Psoas muscle (tissue), 8 donors: ENCODE measurements at regions of chr7 and their contacts with region 1.

Region 1: GRCh38 chr7:26365077-26365900 is 73.6 kb downstream of the SNX10 start:
- DNase-seq: no peak
- ATAC-seq: peak; percentile 78 to 96 (median 88)
- H3K4me3 ChIP-seq: no peak overlapping the region
- H3K27ac ChIP-seq: no peak overlapping the region
- H3K4me1 ChIP-seq: no peaks in the 10 kb centered on the region
- H3K27me3 ChIP-seq: peaks cover 0 to 5% (median 5%) of the 10 kb centered on the region in 3 donors
- CTCF ChIP-seq: peak; percentile 80

Region 2: GRCh38 chr7:25259587-25260243 is 1105.6 kb before region 1 on chr7:
- intact Hi-C with region 1: loop called (anchors 10 kb)
- DNase-seq: peak; percentile 32 to 56
- ATAC-seq: peak; percentile 83 to 96 (median 88)
- H3K4me3 ChIP-seq: no peak overlapping the region
- H3K27ac ChIP-seq: no peak overlapping the region
- H3K4me1 ChIP-seq: peaks cover 3% of the 10 kb centered on the region
- H3K27me3 ChIP-seq: no peaks in the 10 kb centered on the region
- CTCF ChIP-seq: peak; percentile 79

Region 3: DNA sequence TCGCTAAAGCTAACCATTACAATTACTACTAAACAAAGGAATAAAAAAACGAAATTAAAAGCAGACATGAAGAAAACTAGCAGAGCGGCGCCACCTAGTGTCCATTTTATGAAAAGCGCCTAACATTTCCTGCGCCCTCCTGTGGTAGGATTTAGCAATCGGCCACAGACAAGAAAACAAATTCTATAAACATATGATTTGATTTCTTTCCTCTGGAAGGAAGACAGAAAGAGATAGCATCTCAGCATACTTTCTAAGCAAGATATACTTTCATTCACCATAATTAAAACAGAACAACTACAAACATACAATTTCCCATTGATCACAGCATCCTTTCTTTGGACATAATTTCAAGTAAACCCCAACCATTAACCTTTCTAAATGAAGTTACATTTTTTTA is 799.3 kb before region 1 on chr7:
- intact Hi-C with region 1: loop called in 1 of 2 experiments (anchors 10 kb)
- DNase-seq: peak; percentile 17 to 64
- ATAC-seq: peak in 3 of 4 donors; percentile 64 to 80 (median 70)
- H3K4me3 ChIP-seq: peak overlapping the region; percentile 22
- H3K27ac ChIP-seq: no peak overlapping the region
- H3K4me1 ChIP-seq: peaks cover 18% of the 10 kb centered on the region
- H3K27me3 ChIP-seq: no peaks in the 10 kb centered on the region
- CTCF ChIP-seq: peak; percentile 100

Region 4: GRCh38 chr7:26090927-26091519 is 274.3 kb before region 1 on chr7:
- intact Hi-C with region 1: loop called (anchors 1 to 2 kb)
- DNase-seq: no peak
- ATAC-seq: peak in 2 of 4 donors; percentile 57 to 82
- H3K4me3 ChIP-seq: no peak overlapping the region
- H3K27ac ChIP-seq: no peak overlapping the region
- H3K4me1 ChIP-seq: no peaks in the 10 kb centered on the region
- H3K27me3 ChIP-seq: no peaks in the 10 kb centered on the region
- CTCF ChIP-seq: peak; percentile 73

Region 5: DNA sequence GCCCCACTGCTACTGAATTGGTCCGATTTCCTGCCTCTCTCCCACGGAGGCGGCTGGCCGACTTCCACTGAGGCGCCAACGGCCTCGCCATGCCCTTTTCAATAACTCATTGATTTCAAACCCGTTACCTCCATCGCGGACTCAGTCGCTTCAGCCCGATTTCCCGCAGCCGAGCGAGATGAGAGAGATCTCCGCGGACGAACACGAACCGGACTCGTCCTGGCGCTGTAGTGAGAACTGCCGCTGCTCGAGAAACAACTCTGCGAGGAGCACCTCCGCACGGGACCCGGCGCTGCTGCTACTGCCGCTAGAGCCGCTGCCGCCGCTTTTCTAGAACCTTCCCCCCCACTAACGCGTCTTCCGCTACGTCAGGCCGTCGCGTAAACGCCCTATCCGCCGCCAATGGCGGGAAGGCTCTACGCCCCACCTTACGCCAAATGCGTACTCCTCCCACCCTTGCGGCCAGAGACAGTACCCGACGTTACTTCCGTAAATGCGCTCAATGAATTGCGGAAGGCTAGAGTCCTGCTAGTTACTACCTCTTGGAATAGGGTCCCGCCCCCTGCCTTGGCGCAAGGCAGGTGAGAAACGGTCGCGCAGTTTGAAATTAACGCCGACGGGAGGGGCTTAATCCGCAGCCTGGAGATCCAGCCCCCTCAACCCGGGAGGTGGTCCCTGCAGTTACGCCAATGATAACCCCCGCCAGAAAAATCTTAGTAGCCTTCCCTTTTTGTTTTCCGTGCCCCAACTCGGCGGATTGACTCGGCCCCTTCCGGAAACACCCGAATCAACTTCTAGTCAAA is 164.6 kb before region 1 on chr7 and contains the start of gene HNRNPA2B1:
- intact Hi-C with region 1: loop called in 1 of 2 experiments (anchors 5 kb)
- DNase-seq: peak; percentile 94 to 98
- ATAC-seq: peak; percentile 80 to 85 (median 84)
- H3K4me3 ChIP-seq: peak within 1 kb of the TSS; percentile 90
- H3K27ac ChIP-seq: peak within 1 kb of the TSS; percentile 97
- H3K4me1 ChIP-seq: peaks cover 38% of the 10 kb centered on the region
- H3K27me3 ChIP-seq: no peaks in the 10 kb centered on the region
- CTCF ChIP-seq: peak; percentile 7
- total RNA-seq, gene HNRNPA2B1: 323 to 482 (median 452) TPM

Region 6: DNA sequence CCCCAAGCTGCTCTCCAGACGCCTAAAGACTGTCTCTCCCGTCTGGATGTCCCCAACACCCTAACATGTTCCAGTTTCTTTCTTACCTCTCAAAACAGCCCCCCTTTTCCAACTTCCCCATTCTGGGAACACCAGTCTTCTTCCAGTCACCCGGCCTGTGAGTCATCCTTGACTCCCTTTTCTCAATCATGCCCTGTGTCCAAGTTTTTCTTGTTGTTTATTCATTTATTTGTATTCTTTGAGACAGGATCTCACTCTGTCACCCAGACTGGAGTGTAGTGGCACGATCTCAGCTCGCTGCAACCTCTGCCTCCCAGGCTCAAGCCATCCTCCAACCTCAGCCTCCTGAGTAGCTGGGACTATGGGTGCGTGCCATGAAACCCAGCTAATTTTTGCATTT is 58.1 kb before region 1 on chr7:
- intact Hi-C with region 1: no loop called
- DNase-seq: peak in 1 of 2 donors; percentile 15
- ATAC-seq: no peak
- H3K4me3 ChIP-seq: no peak overlapping the region
- H3K27ac ChIP-seq: no peak overlapping the region
- H3K4me1 ChIP-seq: no peaks in the 10 kb centered on the region
- H3K27me3 ChIP-seq: no peaks in the 10 kb centered on the region
- CTCF ChIP-seq: no peak

Region 7: GRCh38 chr7:26574476-26574875 is 209.2 kb after region 1 on chr7:
- intact Hi-C with region 1: no loop called
- DNase-seq: no peak
- ATAC-seq: no peak
- H3K4me3 ChIP-seq: no peak overlapping the region
- H3K27ac ChIP-seq: no peak overlapping the region
- H3K4me1 ChIP-seq: no peaks in the 10 kb centered on the region
- H3K27me3 ChIP-seq: no peaks in the 10 kb centered on the region
- CTCF ChIP-seq: no peak

Region 8: DNA sequence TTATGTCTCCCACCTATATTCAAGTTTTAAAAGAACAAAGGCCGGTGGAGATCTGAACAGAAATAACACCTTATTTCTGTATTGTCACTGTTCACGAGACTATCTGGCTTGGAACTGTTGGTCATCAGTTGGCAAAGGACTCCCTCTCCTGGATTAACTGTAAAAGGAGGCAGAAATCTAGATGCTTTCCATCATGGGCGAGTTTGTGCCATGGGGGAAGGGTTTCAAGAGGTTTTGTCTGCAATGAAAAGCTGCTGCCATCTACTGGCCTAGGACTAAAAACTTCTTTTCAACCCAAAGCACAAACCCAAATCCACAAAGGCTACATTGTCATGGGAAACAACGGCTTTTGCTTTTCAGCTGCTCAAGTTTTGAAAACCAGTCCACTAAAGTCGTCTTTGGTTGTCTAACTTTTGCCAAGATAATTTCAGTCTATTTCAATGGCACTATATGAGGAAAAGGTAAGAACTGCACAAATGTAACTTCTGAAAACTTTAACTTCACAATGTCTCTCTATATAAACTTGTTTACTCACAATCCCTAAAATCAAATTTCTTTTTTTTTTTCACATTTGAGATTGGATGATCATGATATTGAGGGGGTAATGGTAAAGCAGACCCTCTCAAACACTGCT is 302.3 kb after region 1 on chr7:
- intact Hi-C with region 1: loop called (anchors 2 to 5 kb)
- DNase-seq: peak in 1 of 2 donors; percentile 18
- ATAC-seq: peak; percentile 51 to 85 (median 72)
- H3K4me3 ChIP-seq: no peak overlapping the region
- H3K27ac ChIP-seq: no peak overlapping the region
- H3K4me1 ChIP-seq: no peaks in the 10 kb centered on the region
- H3K27me3 ChIP-seq: no peaks in the 10 kb centered on the region
- CTCF ChIP-seq: peak; percentile 76